Natural killer cell (primary cell): ENCODE measurements at regions of chr19 and their contacts with region 1.

Region 1: DNA sequence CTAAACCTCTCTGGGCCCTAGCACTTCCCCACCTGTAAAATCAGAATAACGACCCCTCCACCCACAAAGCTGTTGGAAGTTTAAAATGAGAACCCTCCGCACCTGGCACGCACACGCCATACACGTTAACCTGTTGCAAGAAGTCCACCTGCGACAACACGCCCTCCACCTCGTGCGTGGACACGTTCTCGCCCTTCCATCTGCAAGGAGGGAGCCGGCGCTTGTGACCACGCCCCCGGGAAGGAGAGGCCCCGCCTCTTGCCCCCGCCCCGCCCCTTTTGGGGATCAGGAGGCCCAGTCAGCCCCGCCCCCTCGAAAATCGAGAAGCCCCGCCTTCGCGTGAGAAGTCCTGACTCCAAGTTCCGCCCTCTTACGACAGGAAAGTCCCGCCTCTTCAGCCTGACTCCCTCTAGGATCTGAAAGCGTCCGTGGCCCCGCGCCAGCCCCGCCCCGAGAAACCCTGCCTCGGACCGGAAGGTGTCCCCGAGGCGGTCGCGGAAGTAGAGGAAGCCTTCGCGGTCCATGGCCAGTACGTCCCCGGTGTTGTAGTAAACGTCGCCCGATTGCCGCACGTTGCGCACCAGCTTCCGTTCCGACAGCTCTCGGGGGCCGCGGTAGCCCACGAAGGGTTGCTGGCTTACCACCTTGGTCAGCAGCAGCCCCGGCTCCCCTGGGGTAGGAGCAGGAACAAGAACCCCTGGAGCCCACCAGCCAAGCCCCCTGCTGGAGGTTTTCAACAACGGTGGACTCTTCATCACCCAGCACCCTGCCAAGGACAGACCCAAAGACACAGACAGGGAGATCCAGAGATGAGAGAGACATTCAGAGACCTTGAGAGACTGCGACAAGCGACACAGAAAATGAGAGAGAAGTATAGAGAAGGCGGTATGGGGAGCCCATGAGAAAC is 12.5 kb downstream of the SLC27A5 start:
- DNase-seq: peak; percentile 85 to 96
- ATAC-seq: peak; percentile 88 to 93 (median 89)
- H3K4me3 ChIP-seq: peak overlapping the region; percentile 74
- H3K4me3 Mint-ChIP-seq: peak overlapping the region; percentile 91
- H3K27ac ChIP-seq: peak overlapping the region; percentile 88
- H3K27ac Mint-ChIP-seq: peak overlapping the region; percentile 88 to 97
- H3K4me1 ChIP-seq: peaks cover 23% of the 10 kb centered on the region
- H3K4me1 Mint-ChIP-seq: peaks cover 14 to 18% of the 10 kb centered on the region in 2 donors
- H3K27me3 ChIP-seq: no peaks in the 10 kb centered on the region
- H3K27me3 Mint-ChIP-seq: no peaks in the 10 kb centered on the region
- CTCF ChIP-seq: peak; percentile 23

Region 2: DNA sequence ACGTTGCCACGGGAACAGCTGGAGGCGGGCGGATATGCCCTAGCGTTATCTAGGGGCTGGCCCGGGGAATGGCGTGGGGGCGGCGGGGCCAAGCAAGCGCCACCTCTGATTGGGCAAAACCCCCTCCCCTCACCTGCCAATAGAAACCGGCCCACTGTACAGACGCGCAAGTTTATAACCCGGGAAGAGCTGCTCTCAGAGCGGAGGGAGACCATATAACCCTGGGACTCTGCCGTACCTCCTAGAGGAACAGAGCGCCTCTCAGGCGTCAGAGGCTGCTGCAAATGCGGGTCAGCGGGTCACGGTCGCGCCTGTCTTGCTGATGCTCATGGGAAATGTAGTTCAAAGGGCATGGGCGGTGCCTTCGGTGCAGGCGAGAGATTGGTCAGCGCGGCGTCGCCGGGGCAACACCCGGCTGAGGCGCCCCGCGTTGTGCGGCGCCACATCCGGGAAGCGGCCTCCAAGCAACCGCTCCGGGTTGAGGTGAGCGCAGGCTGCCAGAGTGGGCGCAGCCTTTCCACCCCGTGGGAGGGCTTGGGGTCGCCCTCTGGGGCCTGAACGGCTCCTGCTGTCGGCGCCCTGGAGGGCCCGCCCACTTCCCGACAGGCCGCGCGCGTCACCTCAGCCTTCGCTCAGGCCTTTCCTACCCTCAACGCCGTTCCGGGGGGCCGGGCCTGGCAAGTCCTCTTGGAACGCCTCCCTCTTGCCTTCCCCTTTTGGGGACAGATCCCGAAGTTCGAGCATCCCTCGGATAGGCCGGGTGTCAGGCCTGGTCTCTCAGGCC is 23.4 kb before region 1 on chr19 and contains the start of gene ZNF446:
- intact Hi-C with region 1: loop called (anchors 1 kb)
- DNase-seq: peak; percentile 93 to 99
- ATAC-seq: peak; percentile 84 to 93 (median 88)
- H3K4me3 ChIP-seq: peak within 1 kb of the TSS; percentile 59
- H3K4me3 Mint-ChIP-seq: peak within 1 kb of the TSS; percentile 93
- H3K27ac ChIP-seq: peak within 1 kb of the TSS; percentile 90
- H3K27ac Mint-ChIP-seq: peak within 1 kb of the TSS; percentile 94 to 99
- H3K4me1 ChIP-seq: peaks cover 21% of the 10 kb centered on the region
- H3K4me1 Mint-ChIP-seq: peaks cover 8 to 18% of the 10 kb centered on the region in 2 donors
- H3K27me3 ChIP-seq: no peaks in the 10 kb centered on the region
- H3K27me3 Mint-ChIP-seq: no peaks in the 10 kb centered on the region
- CTCF ChIP-seq: no peak
- total RNA-seq, gene ZNF446: 11.9 to 14.5 (median 13.5) TPM

Region 3: DNA sequence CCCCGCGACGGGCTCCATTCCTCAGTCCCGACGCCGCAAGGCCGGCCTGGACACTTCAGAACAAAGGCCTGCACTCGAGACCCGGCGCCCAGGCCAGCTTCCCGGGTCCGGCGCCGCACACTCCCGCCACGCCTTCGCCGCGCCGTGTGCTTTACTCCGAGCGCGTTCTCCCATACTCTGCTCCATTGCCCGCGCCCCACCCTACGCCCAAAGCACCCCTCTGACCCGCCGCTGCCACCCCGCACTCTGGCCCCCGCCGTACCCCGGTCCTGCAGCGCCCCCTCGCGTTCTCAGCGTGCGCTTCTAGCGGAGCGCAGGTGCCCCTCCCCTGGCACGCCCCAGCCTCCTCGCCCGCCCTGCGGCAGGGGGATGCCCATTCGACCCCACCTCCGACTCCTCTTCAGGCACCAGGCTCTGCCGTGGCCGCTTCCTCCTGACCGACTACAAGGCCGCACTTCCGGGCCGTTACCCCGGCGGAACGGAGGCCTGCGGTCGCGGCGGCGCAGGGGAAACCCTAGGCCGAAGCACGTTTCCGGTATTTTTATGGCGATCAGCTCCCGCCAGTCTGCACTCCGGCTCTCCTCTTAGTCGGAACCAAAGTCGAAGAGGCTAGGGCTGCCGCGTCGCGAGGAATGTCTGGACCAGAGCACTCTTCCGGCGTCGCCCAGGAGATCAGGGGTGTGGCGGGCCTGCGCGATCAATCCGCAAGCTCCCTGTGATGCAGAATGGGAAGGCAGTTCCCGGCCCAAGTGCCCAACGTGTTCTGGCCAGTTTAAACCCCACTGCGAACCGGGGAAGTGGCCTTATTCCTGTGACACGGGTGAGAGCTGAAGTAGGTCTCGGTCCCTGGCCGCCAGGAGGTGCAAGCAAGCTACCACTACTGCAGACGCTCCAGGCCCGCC is 20.3 kb after region 1 on chr19 and contains the start of gene ZBTB45:
- intact Hi-C with region 1: loop called (anchors 1 kb)
- DNase-seq: peak; percentile 91 to 95
- ATAC-seq: peak; percentile 80 to 93 (median 83)
- H3K4me3 ChIP-seq: peak within 1 kb of the TSS; percentile 81
- H3K4me3 Mint-ChIP-seq: peak within 1 kb of the TSS; percentile 97
- H3K27ac ChIP-seq: peak within 1 kb of the TSS; percentile 98
- H3K27ac Mint-ChIP-seq: peak within 1 kb of the TSS; percentile 97 to 100
- H3K4me1 ChIP-seq: peaks cover 38% of the 10 kb centered on the region
- H3K4me1 Mint-ChIP-seq: peaks cover 25 to 46% of the 10 kb centered on the region in 2 donors
- H3K27me3 ChIP-seq: no peaks in the 10 kb centered on the region
- H3K27me3 Mint-ChIP-seq: no peaks in the 10 kb centered on the region
- CTCF ChIP-seq: peak; percentile 71
- total RNA-seq, gene ZBTB45: 9.6 to 12.6 (median 9.8) TPM

Region 4: GRCh38 chr19:58543826-58544590 is 44.7 kb after region 1 on chr19 and contains the start of gene TRIM28:
- intact Hi-C with region 1: loop called (anchors 1 kb)
- DNase-seq: peak; percentile 100
- ATAC-seq: peak; percentile 85 to 94 (median 86)
- H3K4me3 ChIP-seq: peak within 1 kb of the TSS; percentile 51
- H3K4me3 Mint-ChIP-seq: peak within 1 kb of the TSS; percentile 98
- H3K27ac ChIP-seq: peak within 1 kb of the TSS; percentile 93
- H3K27ac Mint-ChIP-seq: peak within 1 kb of the TSS; percentile 99
- H3K4me1 ChIP-seq: peaks cover 27% of the 10 kb centered on the region
- H3K4me1 Mint-ChIP-seq: peaks cover 31 to 34% of the 10 kb centered on the region in 2 donors
- H3K27me3 ChIP-seq: peaks cover 2% of the 10 kb centered on the region
- H3K27me3 Mint-ChIP-seq: peaks cover 6 to 12% of the 10 kb centered on the region in 2 donors
- CTCF ChIP-seq: no peak
- total RNA-seq, gene TRIM28: 330 to 451 (median 408) TPM

Region 5: DNA sequence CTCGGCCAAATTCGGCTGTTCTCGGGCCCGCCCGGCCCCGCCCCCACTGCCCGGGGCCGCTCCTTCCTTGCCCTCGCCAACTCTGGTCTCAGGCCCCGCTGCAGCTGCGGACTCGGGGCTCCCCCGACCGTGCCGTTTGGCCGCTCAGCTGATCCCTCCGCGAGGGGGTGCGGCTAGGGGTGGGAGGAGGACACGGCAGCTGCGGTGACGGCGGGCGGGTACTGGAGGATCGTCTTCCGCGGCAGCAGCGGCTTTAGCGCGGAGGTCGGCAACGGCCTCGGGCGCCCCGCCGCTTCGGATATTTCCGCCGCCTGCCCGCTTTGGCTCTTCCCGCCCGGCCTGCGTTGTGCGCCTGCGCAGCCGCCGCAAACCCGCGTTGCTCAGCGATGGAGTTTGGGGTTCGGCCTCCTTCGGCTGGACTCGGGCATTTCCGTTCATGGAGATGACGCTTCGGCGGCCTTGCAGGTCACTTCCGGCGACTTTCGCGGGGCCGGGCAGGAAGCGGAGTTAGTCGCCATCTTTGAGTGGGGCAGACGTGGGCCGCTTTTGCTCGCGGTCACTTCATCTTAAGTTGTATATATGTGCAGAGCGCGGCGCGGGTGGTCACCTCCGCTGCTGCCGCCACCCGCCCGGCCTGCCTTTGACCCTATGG is 59.5 kb after region 1 on chr19:
- intact Hi-C with region 1: no loop called
- DNase-seq: peak; percentile 99 to 100
- ATAC-seq: peak; percentile 64 to 85 (median 68)
- H3K4me3 ChIP-seq: peak overlapping the region; percentile 95
- H3K4me3 Mint-ChIP-seq: peak overlapping the region; percentile 98
- H3K27ac ChIP-seq: peak overlapping the region; percentile 100
- H3K27ac Mint-ChIP-seq: peak overlapping the region; percentile 99
- H3K4me1 ChIP-seq: peaks cover 78% of the 10 kb centered on the region
- H3K4me1 Mint-ChIP-seq: peaks cover 46 to 91% of the 10 kb centered on the region in 2 donors
- H3K27me3 ChIP-seq: no peaks in the 10 kb centered on the region
- H3K27me3 Mint-ChIP-seq: no peaks in the 10 kb centered on the region
- CTCF ChIP-seq: no peak